AG04449 (cell line): ENCODE measurements at regions of chr16 and their contacts with region 1.

Region 1: DNA sequence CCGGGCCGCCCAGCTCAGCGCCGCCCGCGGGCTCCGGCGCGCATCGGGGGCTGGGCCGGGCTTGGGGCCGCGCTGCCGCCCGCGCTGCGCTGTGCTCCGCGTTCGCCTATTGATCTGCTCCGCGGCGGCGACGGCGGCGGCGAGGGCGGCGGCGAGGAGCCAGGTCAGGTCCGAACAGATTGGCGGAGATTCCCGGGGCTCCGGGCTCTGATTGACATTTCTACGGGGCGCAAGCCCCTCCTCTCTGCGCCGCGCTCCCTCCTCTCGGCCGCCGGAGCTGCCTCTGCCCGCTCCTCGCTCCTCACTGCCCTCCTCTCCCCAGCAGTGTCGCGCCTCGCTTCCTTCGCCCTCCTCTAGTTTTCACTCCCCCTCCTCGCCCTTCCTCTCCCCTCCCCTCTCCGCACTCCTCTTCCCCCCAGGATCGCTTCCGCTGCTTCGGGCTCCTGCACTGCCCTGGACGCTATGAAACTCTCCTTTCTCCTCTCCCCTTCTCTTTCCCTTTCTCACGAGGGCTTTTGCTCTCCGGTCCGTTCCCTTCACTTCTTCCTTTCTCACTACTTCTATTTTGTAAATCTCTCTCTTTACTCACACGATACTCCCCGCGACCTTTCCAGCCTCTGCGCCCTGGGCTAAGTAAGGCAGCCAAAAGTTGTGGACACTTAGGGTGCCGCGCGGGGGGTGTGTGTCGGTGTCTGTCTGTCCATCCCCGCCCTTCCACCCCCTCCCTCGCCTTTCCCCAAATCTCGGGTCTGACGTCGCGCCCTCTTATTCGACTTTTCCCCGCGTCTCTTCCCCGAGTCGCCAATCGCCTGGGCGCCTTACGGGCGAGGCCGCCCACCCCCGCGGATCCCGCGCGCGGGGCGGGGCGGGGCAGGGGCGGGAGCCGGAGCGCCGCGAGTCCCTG is at the start of gene IRX3:
- DNase-seq: peak; percentile 40
- H3K4me3 ChIP-seq: peak within 1 kb of the TSS; percentile 76
- CTCF ChIP-seq: no peak

Region 2: GRCh38 chr16:53789137-53789536 is 497.2 kb before region 1 on chr16:
- CTCF ChIA-PET with region 1: no interaction called
- POLR2A ChIA-PET with region 1: no interaction called
- DNase-seq: peak; percentile 88
- H3K4me3 ChIP-seq: no peak overlapping the region
- CTCF ChIP-seq: no peak

Region 3: GRCh38 chr16:54266363-54266955 is 19.9 kb before region 1 on chr16:
- CTCF ChIA-PET with region 1: interaction called, 42 read pairs
- POLR2A ChIA-PET with region 1: no interaction called
- DNase-seq: no peak
- H3K4me3 ChIP-seq: no peak overlapping the region
- CTCF ChIP-seq: no peak

Region 4: DNA sequence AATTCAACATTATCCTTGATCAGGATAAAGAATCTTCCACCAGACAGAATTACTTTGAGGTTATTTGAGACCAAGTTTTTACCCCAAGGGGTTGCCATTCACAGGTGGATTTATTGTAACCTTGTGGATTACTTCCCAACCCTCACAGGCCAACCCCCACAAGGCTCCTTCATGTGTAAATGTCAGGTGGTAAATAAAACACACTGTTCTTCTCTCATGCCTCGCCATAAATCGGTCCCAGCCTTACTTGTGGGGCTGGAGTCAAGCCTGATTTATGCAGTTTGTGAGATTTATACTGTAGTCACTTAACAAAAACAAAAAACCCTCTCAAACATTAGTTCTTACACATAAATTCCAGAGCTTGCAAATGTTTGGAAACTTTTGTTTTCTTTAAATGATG is 98.8 kb after region 1 on chr16:
- CTCF ChIA-PET with region 1: no interaction called
- POLR2A ChIA-PET with region 1: no interaction called
- DNase-seq: no peak
- H3K4me3 ChIP-seq: no peak overlapping the region
- CTCF ChIP-seq: no peak

Region 5: DNA sequence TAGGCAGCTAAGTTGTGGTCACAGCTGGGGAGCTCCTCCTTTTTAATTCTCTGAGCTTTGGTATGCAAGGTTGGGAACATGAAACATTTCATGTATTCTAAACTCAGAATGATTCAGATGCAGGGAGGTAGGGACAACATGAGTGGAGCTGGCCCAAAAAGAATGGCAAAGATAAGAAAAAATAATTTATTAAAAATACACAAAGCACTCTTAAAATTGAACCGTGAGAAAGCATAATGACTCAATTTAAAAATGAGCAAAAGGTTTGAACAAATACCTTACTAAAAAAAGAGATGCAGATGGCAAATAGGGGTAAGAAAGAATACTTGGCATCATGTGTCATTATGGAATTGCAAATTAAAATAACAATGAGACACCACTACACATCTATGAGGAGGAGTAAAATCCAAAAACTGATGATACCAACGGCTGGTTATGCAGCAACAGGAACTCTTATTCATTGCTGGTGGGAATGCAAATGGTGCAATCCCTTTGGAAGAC is 175.9 kb after region 1 on chr16:
- CTCF ChIA-PET with region 1: interaction called, 3 read pairs
- POLR2A ChIA-PET with region 1: interaction called, 11 read pairs
- DNase-seq: peak; percentile 83
- H3K4me3 ChIP-seq: no peak overlapping the region
- CTCF ChIP-seq: no peak

Region 6: DNA sequence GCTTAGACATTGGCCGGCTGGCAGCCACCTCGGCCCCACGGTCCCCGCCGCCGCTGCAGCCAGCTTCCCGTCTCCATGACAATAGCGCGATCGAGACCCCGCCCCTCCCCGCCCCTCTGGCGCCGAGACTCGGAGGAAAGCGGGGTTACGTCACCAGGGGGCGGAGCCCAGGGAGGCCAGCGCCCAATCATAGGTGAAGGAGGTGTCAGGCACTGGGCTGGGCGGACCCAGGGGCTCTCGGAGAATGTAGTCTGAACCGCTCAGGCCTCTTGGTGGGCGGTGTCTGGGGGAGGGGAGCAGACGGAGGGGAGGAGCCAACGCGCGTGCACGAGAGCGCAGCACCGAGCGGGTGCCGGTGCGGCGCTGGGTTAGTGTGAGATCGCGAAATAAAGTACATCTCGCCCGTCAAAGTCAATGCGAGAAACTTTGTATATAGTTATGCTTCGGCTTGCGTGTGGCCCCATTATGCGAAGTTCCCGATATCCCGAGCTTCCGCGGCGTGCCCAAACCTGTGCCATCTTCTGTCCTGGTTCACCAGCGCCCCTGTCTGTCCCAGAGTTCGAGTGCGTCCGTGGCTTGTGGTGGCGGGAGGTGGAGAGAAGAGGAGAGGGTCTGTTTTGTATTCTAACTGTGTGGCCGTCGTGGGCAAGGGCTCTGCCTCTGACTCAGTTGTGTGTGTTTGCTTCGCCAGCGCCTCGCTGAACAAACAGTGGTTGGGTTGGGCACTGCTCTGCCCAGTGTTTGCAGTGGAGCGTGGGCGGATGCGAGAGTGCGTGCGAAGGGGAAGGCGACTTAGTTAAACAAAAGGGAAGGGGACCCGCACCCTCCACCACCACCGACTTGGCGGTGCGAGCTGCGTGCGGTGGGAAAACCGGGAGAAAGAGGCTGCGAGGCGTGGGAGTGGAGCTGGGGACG is 643.0 kb after region 1 on chr16:
- CTCF ChIA-PET with region 1: interaction called, 17 read pairs
- POLR2A ChIA-PET with region 1: interaction called, 28 read pairs
- DNase-seq: peak; percentile 92
- H3K4me3 ChIP-seq: peak overlapping the region; percentile 78
- CTCF ChIP-seq: peak; percentile 31

Region 7: DNA sequence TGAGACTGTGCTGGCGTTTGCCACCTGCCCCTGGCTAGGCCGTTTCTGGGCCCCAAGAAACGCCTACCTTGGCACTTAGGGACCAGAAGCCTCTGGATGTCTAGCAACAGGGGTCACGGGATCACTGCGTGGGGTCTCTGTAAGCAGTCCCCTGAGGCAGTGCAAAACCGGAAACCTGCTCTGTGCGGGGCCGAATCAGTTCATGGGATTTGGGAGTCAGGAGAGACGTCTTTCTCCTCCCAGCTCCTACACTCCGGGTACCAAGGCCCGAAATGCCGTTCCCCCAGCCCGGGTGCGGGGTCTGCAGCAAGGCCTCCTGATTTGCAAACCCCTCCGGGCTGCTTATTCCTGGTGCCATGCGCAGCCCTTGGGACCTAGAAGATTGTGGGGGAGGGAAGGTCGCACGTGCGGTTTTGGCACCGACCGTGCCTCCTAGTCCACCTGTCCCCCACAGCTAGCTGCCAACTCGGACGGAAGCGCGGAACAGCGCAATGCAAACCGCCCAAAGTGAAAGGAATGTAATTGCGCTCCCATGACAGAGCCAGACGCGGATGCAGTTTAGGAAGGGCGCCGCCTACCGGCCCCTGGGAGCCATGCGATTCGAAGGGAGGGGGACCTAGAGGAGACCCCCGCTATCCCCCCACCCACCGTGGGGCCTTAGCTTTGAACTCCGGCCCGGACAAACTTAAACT is 650.8 kb after region 1 on chr16:
- CTCF ChIA-PET with region 1: interaction called, 17 read pairs
- POLR2A ChIA-PET with region 1: interaction called, 28 read pairs
- DNase-seq: no peak
- H3K4me3 ChIP-seq: peak overlapping the region; percentile 54
- CTCF ChIP-seq: peak; percentile 86